ENCODE measurements at regions of chr17 and their contacts with region 1.

Region 1: GRCh38 chr17:39598047-39598481 is 9.7 kb downstream of the NEUROD2 start:
- DNase-seq: peak; percentile 74
- H3K4me3 ChIP-seq: no peak overlapping the region
- H3K27ac ChIP-seq: no peak overlapping the region
- H3K4me1 ChIP-seq: peaks cover 7 to 32% of the 10 kb centered on the region in 2 experiments
- H3K27me3 ChIP-seq: peaks cover 84% of the 10 kb centered on the region
- CTCF ChIP-seq: no peak
- EP300 ChIP-seq: no peak
- RAD21 ChIP-seq: no peak

Region 2: DNA sequence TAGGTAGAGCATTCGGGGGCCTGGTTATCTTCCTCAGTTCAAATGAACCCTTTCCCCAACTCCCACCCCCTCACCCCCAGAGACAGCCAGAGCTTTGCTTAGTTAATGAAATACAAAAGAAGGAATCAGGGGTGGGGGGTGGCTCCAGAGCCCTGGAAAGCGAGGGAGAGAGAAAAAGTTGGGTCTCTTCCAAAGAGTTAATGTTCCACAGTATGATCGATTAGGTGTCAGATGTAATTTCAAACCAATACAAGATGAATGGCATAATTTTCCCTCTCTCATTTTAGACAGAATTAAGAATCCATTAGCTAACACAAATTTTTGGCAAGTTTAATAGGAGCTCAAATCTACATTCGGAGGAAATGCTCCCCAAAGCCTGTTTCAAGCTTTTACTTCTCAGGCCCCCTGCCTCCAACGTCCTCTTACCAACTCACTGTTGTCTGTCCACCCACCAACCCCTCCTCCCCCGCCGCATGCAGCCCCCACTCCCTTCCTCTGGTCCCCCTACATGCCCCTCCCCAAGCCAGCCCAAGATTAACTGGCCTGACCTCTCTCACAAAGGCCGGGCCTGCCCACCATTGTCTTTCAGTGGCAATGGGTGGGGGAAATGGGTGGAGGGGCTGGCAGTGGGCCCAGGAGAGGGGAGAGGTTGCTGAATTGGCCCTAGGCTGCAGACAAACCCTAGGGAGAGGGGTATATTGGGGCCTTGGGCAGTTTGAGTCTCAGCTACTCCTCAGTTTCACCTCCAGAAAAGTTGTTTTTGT is 18.6 kb before region 1 on chr17:
- CTCF ChIA-PET with region 1: interaction called, 15 read pairs
- POLR2A ChIA-PET with region 1: no interaction called
- DNase-seq: no peak
- H3K4me3 ChIP-seq: no peak overlapping the region
- H3K27ac ChIP-seq: no peak overlapping the region
- H3K4me1 ChIP-seq: peaks cover 0 to 3% of the 10 kb centered on the region in 2 experiments; a peak in 1 of 4 replicates
- H3K27me3 ChIP-seq: no peaks in the 10 kb centered on the region
- CTCF ChIP-seq: no peak
- EP300 ChIP-seq: no peak
- RAD21 ChIP-seq: no peak

Measured in SK-N-SH (cell line).